Astrocyte of the cerebellum (primary cell): ENCODE measurements at regions of chr11 and their contacts with region 1.

Region 1: GRCh38 chr11:85953491-85954143 is 98.4 kb downstream of the CCDC83 start:
- DNase-seq: no peak
- H3K4me3 ChIP-seq: no peak overlapping the region
- CTCF ChIP-seq: no peak

Region 2: DNA sequence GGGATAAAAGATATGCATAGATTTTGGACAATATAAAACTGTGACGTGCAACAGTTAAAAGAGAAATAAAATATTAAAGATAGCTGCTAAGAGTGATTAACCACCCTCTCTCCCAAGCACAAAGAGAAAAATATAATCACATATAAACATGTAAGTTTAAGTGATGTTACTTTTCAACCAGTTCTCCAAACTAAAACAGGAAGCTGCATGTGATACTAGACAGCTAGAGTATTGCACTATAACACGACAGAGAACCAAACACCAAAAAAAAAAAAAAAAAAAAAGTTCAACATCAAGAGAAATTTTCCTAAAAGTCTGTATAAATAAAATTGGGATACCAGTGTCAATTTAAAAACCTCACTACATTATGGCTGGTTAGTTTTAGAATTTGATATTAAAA is 36.1 kb after region 1 on chr11:
- in situ Hi-C with region 1: loop called (anchors 5 kb)
- DNase-seq: no peak
- H3K4me3 ChIP-seq: no peak overlapping the region
- CTCF ChIP-seq: no peak